ENCODE measurements at regions of chr2 and their contacts with region 1.

Region 1: GRCh38 chr2:145919477-145919876 is 1399.6 kb upstream of the ZEB2 start:
- DNase-seq: no peak

Region 2: GRCh38 chr2:144586476-144586875 is 1333.0 kb before region 1 on chr2:
- intact Hi-C with region 1: loop called in 1 of 2 experiments (anchors 5 kb)
- DNase-seq: no peak

Region 3: DNA sequence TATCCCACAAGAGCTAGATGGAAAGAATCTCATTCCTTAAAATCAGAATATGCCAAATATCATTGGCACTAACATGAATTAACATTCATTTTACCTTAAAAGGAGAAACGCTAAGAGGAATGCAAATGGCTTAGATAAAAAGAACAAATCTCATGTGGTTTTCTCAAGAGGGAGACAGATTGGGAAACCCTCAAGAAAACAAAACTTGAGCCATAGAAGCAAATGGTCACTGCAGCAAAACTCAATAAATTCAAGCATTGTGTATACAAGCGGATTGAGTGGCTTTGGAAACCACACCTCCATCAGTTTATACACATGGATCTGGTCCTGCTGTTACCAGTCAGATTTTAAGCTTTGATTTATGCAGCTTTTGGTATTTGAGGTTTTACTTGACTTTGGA is 67.7 kb before region 1 on chr2:
- intact Hi-C with region 1: no loop called
- DNase-seq: no peak

Region 4: DNA sequence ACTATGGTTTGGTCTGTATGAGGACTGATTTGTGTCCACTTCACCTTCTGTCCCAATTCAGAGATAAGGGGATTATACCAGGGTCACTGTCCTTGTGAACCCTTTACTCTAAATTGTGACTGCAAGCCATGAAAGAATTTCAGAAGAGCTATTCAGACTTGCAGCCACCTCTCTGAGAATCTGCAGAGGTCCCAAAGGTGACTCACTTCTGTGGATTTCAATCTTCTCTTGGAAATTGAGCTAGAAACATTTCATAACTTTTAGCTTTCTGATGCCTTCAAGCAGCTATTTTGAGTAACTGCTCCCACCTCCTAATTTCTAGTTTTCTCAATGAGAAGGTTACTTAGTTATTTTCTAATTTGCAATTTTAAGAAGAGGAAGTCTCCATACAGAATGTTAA is 682.9 kb after region 1 on chr2:
- intact Hi-C with region 1: no loop called
- DNase-seq: no peak

Measured in posterior vena cava (tissue), 2 donors.